Activated CD8-positive, alpha-beta T cell treated with anti-CD3 and anti-CD28 coated beads, Interleukin-2, amount 10 ng/mL, durations not matched to agents 7 days and 5 days (primary cell): ENCODE measurements at regions of chr6 and their contacts with region 1.

Region 1: GRCh38 chr6:99241905-99242534 is 107.5 kb downstream of the FAXC start:
- DNase-seq: no peak
- ATAC-seq: no peak
- H3K4me3 Mint-ChIP-seq: no peak overlapping the region
- H3K27ac Mint-ChIP-seq: no peak overlapping the region
- H3K4me1 Mint-ChIP-seq: no peaks in the 10 kb centered on the region
- H3K27me3 Mint-ChIP-seq: peaks cover 3% of the 10 kb centered on the region

Region 2: GRCh38 chr6:99151634-99152344 is 90.2 kb before region 1 on chr6:
- CTCF ChIA-PET with region 1: interaction called, 12 read pairs
- POLR2A ChIA-PET with region 1: no interaction called
- DNase-seq: peak; percentile 54
- ATAC-seq: peak; percentile 55
- H3K4me3 Mint-ChIP-seq: no peak overlapping the region
- H3K27ac Mint-ChIP-seq: no peak overlapping the region
- H3K4me1 Mint-ChIP-seq: no peaks in the 10 kb centered on the region
- H3K27me3 Mint-ChIP-seq: no peaks in the 10 kb centered on the region

Region 3: GRCh38 chr6:99364026-99364425 is 122.0 kb after region 1 on chr6:
- CTCF ChIA-PET with region 1: no interaction called
- POLR2A ChIA-PET with region 1: no interaction called
- DNase-seq: no peak
- ATAC-seq: no peak
- H3K4me3 Mint-ChIP-seq: no peak overlapping the region
- H3K27ac Mint-ChIP-seq: no peak overlapping the region
- H3K4me1 Mint-ChIP-seq: no peaks in the 10 kb centered on the region
- H3K27me3 Mint-ChIP-seq: peaks cover 10% of the 10 kb centered on the region